Activated T-helper 1 cell treated with anti-CD3 and anti-CD28 coated beads, Interleukin-12 subunit alpha, Interleukin-12 subunit beta, Interleukin-2, Interleukin-4 antibody, amounts not matched to agents 30 ng/mL and 10 ng/mL and 1 ng/mL, durations not matched to agents 14 hours and 24 hours and 36 hours (primary cell): ENCODE measurements at regions of chr2 and their contacts with region 1.

Region 1: GRCh38 chr2:69694894-69695849 is 46.8 kb upstream of the ANXA4 start:
- DNase-seq: no peak
- H3K4me3 Mint-ChIP-seq: peak overlapping the region; percentile 2
- H3K27ac Mint-ChIP-seq: peak overlapping the region; percentile 63
- H3K4me1 Mint-ChIP-seq: peaks cover 80% of the 10 kb centered on the region
- H3K27me3 Mint-ChIP-seq: no peaks in the 10 kb centered on the region

Region 2: DNA sequence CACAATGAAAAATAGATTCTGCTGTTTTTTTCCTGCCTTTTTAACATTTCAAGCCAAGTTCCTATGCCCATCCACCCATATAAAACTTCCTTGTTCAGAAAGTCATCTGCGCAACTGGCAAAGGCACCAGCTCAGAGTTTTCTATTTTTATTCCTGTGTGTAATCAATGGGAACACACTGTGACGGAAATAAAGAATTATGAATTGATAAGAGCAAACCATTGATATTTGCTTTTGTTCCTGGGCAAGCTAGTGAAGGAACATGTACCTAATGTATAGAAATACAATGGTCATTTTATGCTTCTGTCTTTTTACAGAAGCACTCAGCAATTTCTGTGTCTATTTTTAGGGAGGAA is 20.9 kb before region 1 on chr2:
- intact Hi-C with region 1: loop called (anchors 1 kb)
- DNase-seq: no peak
- H3K4me3 Mint-ChIP-seq: no peak overlapping the region
- H3K27ac Mint-ChIP-seq: no peak overlapping the region
- H3K4me1 Mint-ChIP-seq: peaks cover 24% of the 10 kb centered on the region
- H3K27me3 Mint-ChIP-seq: no peaks in the 10 kb centered on the region